Mammary epithelial cell (primary cell): ENCODE measurements at regions of chr2 and their contacts with region 1.

Region 1: DNA sequence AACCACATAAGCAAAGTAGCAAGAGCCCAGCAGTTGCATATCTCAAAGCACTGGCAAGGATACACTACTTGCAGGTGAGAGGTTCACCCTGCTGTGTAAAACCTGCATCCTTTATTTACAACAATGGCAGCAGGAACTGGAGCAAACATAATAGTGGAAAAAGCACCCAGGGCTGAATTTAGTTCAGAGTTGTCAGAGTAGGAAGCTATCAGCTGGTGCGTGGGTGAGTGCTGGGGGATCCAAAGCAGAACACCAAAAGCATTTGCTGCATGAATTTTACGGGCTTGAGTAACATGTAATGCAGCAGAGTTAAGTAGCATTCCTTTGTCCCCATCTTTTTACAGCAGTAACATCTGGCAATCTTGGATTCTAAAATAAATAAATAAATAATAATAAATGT is 73.5 kb upstream of the SRD5A2 start:
- DNase-seq: no peak
- H3K4me3 ChIP-seq: no peak overlapping the region
- H3K27ac ChIP-seq: no peak overlapping the region
- H3K4me1 ChIP-seq: peaks cover 1% of the 10 kb centered on the region
- H3K27me3 ChIP-seq: no peaks in the 10 kb centered on the region
- CTCF ChIP-seq: no peak

Region 2: DNA sequence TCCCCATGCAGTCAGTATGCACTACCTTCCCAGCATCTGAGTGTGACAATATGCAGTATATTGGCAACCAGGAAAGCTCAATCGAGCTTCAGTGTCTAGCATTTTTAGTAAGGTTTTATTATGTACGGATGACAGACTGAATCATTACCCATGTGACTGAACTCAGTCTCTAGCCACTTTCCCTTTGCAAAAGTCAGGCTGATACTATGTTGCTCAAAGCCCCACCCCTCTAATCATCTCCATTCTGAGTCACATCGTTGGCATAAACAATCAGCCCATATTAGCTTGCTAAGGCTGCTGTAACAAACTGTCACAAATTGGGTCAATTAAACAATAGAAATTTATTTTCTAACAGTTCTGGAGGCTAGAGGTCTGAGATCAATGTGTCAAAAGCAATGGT is 47.7 kb before region 1 on chr2:
- CTCF ChIA-PET with region 1: no interaction called
- dilution Hi-C with region 1: loop called (anchors 5 kb)
- in situ Hi-C with region 1: no loop called
- intact Hi-C with region 1: no loop called
- DNase-seq: peak; percentile 64
- H3K4me3 ChIP-seq: no peak overlapping the region
- H3K27ac ChIP-seq: no peak overlapping the region
- H3K4me1 ChIP-seq: no peaks in the 10 kb centered on the region
- H3K27me3 ChIP-seq: no peaks in the 10 kb centered on the region
- CTCF ChIP-seq: no peak

Region 3: DNA sequence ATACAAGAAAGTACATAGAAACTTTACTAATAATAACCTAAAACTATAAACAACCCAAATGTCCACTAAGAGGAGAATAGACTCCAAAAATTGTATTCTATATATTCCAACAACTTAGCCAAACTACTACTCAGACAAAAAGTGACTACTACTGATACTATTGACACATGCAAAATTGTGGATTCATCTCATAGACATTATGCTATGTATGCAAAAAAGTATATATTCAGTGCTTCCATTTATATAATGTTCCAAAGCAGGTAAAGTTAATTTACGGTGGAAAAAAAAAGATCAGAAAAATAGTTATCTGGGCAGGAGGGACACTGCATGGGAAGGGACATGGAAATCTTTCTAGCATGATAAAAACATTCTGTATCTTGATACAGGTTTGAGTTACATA is 11.5 kb before region 1 on chr2:
- CTCF ChIA-PET with region 1: no interaction called
- dilution Hi-C with region 1: no loop called
- in situ Hi-C with region 1: no loop called
- intact Hi-C with region 1: no loop called
- DNase-seq: no peak
- H3K4me3 ChIP-seq: no peak overlapping the region
- H3K27ac ChIP-seq: no peak overlapping the region
- H3K4me1 ChIP-seq: no peaks in the 10 kb centered on the region
- H3K27me3 ChIP-seq: peaks cover 9% of the 10 kb centered on the region
- CTCF ChIP-seq: no peak

Region 4: GRCh38 chr2:31997653-31998052 is 343.4 kb after region 1 on chr2:
- CTCF ChIA-PET with region 1: no interaction called
- dilution Hi-C with region 1: no loop called
- in situ Hi-C with region 1: no loop called
- intact Hi-C with region 1: no loop called
- DNase-seq: no peak
- H3K4me3 ChIP-seq: no peak overlapping the region
- H3K27ac ChIP-seq: no peak overlapping the region
- H3K4me1 ChIP-seq: peaks cover 3% of the 10 kb centered on the region
- H3K27me3 ChIP-seq: no peaks in the 10 kb centered on the region
- CTCF ChIP-seq: no peak